CD8-positive, alpha-beta T cell (primary cell): ENCODE measurements at regions of chr1 and their contacts with region 1.

Region 1: GRCh38 chr1:114723915-114724314 is 7.3 kb upstream of the NRAS start:
- DNase-seq: no peak
- ATAC-seq: no peak
- H3K4me3 ChIP-seq: no peak overlapping the region
- H3K4me3 Mint-ChIP-seq: no peak overlapping the region
- H3K27ac ChIP-seq: no peak overlapping the region
- H3K27ac Mint-ChIP-seq: no peak overlapping the region
- H3K4me1 ChIP-seq: no peaks in the 10 kb centered on the region
- H3K4me1 Mint-ChIP-seq: peaks cover 2% of the 10 kb centered on the region
- H3K27me3 ChIP-seq: no peaks in the 10 kb centered on the region
- H3K27me3 Mint-ChIP-seq: no peaks in the 10 kb centered on the region
- CTCF ChIP-seq: no peak

Region 2: GRCh38 chr1:114620419-114620818 is 103.5 kb before region 1 on chr1:
- CTCF ChIA-PET with region 1: no interaction called
- POLR2A ChIA-PET with region 1: no interaction called
- intact Hi-C with region 1: no loop called
- DNase-seq: no peak
- ATAC-seq: no peak
- H3K4me3 ChIP-seq: no peak overlapping the region
- H3K4me3 Mint-ChIP-seq: no peak overlapping the region
- H3K27ac ChIP-seq: no peak overlapping the region
- H3K27ac Mint-ChIP-seq: no peak overlapping the region
- H3K4me1 ChIP-seq: no peaks in the 10 kb centered on the region
- H3K4me1 Mint-ChIP-seq: no peaks in the 10 kb centered on the region
- H3K27me3 ChIP-seq: no peaks in the 10 kb centered on the region
- H3K27me3 Mint-ChIP-seq: no peaks in the 10 kb centered on the region
- CTCF ChIP-seq: no peak

Region 3: DNA sequence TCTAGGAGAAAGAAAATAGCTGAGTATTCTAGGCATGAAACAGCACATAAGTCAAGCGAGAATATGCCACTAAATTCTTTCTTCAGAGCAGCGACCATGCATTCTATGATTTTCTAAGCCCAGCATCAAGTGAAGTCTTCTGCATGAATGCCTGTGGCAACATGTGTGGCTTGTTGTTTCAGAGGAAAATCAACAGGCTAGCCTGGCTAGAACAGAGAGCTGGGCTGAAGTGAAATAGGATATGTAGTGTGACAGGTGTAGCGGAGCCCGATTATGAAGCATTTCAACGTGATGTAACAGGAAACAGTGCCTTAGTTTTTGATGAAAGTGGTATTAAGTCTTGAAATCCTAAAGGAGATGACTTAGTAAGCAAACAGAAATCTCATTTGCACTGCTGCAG is 26.9 kb after region 1 on chr1:
- CTCF ChIA-PET with region 1: no interaction called
- POLR2A ChIA-PET with region 1: interaction called, 3 read pairs
- intact Hi-C with region 1: loop called in 1 of 2 experiments (anchors 2 kb)
- DNase-seq: no peak
- ATAC-seq: no peak
- H3K4me3 ChIP-seq: peak overlapping the region in 1 of 2 experiments; percentile 13
- H3K4me3 Mint-ChIP-seq: peak overlapping the region; percentile 55
- H3K27ac ChIP-seq: no peak overlapping the region
- H3K27ac Mint-ChIP-seq: no peak overlapping the region
- H3K4me1 ChIP-seq: peaks cover 89% of the 10 kb centered on the region
- H3K4me1 Mint-ChIP-seq: peaks cover 88% of the 10 kb centered on the region
- H3K27me3 ChIP-seq: no peaks in the 10 kb centered on the region
- H3K27me3 Mint-ChIP-seq: no peaks in the 10 kb centered on the region
- CTCF ChIP-seq: no peak